OCI-LY7 (cell line): ENCODE measurements at regions of chr14 and their contacts with region 1.

Region 1: GRCh38 chr14:77033622-77034521 is 5.4 kb upstream of the IRF2BPL start:
- DNase-seq: peak; percentile 84
- H3K4me3 ChIP-seq: peak overlapping the region; percentile 70
- H3K27ac ChIP-seq: peak overlapping the region; percentile 87
- H3K4me1 ChIP-seq: peaks cover 90% of the 10 kb centered on the region
- CTCF ChIP-seq: no peak

Region 2: GRCh38 chr14:76863724-76864407 is 170.0 kb before region 1 on chr14:
- CTCF ChIA-PET with region 1: no interaction called
- POLR2A ChIA-PET with region 1: no interaction called
- intact Hi-C with region 1: no loop called
- DNase-seq: no peak
- H3K4me3 ChIP-seq: no peak overlapping the region
- H3K27ac ChIP-seq: no peak overlapping the region
- H3K4me1 ChIP-seq: no peaks in the 10 kb centered on the region
- CTCF ChIP-seq: no peak

Region 3: DNA sequence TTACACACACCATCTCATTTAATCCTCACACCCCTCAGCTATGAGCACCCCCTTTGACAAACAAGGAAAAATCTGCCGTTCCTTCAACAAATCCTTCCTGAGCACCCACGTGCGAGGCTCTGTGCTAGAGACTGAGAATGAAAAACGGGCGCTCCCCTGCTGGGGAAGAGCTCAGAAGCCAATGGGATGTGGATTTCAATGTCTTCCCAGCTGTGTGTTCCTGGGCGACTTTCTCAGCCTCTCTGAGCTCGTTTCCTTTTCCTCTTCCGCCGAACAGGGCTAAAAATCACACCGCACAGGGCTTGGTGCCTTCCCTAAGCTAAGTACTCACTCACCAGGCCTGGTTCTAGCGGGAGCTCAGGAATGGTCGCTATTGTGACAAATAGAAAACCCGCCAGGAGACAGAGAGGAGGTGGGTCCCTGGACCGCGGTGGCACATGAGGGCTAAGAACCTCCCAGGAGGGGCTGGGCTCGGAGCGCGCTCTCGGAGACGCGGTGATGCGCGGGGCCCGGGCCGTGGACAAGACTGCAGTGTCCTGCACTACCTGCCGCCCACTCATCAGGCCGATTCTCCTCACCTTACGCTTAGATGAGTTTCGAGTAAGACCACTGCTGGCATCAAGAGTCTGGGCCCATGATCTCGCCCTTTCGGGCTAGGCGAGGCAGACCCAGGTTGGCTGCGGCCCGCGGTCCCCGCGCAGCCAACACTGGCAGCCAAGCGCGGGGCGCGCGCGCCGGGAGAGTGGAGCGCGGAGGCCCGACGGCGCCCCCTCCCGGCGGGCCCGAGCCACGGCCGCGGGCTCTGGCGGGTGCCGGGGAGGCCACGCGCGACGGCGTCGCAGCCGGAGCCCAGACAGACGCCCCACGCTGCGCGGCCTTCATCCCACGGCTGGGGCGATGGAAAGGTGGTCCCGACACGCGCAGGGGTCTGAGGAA is 90.7 kb after region 1 on chr14:
- CTCF ChIA-PET with region 1: no interaction called
- POLR2A ChIA-PET with region 1: interaction called, 3 read pairs
- intact Hi-C with region 1: loop called (anchors 2 kb)
- DNase-seq: peak; percentile 51
- H3K4me3 ChIP-seq: peak overlapping the region; percentile 39
- H3K27ac ChIP-seq: peak overlapping the region; percentile 96
- H3K4me1 ChIP-seq: peaks cover 69% of the 10 kb centered on the region
- CTCF ChIP-seq: peak; percentile 56

Region 4: GRCh38 chr14:77376771-77377501 is 343.1 kb after region 1 on chr14 and contains the starts of genes SAMD15 and TMED8:
- CTCF ChIA-PET with region 1: no interaction called
- POLR2A ChIA-PET with region 1: no interaction called
- intact Hi-C with region 1: loop called (anchors 10 kb)
- DNase-seq: peak; percentile 87
- H3K4me3 ChIP-seq: peak within 1 kb of the TSS; percentile 87
- H3K27ac ChIP-seq: peak within 1 kb of the TSS; percentile 96
- H3K4me1 ChIP-seq: peaks cover 32% of the 10 kb centered on the region
- CTCF ChIP-seq: peak; percentile 31; the same call in 1 of the 2 replicates
- total RNA-seq, gene SAMD15: 1.1 and 1.6 TPM in 2 replicates
- total RNA-seq, gene TMED8: 19.5 and 21.9 TPM in 2 replicates

Region 5: GRCh38 chr14:77593501-77593961 is 559.7 kb after region 1 on chr14:
- CTCF ChIA-PET with region 1: no interaction called
- POLR2A ChIA-PET with region 1: no interaction called
- intact Hi-C with region 1: loop called (anchors 10 kb)
- DNase-seq: peak; percentile 89
- H3K4me3 ChIP-seq: peak overlapping the region; percentile 46
- H3K27ac ChIP-seq: peak overlapping the region; percentile 91
- H3K4me1 ChIP-seq: peaks cover 87% of the 10 kb centered on the region
- CTCF ChIP-seq: no peak